ENCODE measurements at regions of chr2 and their contacts with region 1.

Region 1: GRCh38 chr2:20300656-20301055 is 50.0 kb downstream of the PUM2 start:
- DNase-seq: no peak
- ATAC-seq: no peak
- H3K4me3 Mint-ChIP-seq: no peak overlapping the region
- H3K27ac Mint-ChIP-seq: peak overlapping the region; percentile 82
- H3K4me1 Mint-ChIP-seq: peaks cover 7% of the 10 kb centered on the region; the same call in 1 of the 2 replicates
- H3K27me3 Mint-ChIP-seq: no peaks in the 10 kb centered on the region
- CTCF ChIP-seq: no peak

Region 2: GRCh38 chr2:20326163-20326780 is 25.6 kb after region 1 on chr2:
- CTCF ChIA-PET with region 1: interaction called, 10 read pairs
- POLR2A ChIA-PET with region 1: no interaction called
- DNase-seq: peak; percentile 36
- ATAC-seq: peak; percentile 92
- H3K4me3 Mint-ChIP-seq: no peak overlapping the region
- H3K27ac Mint-ChIP-seq: no peak overlapping the region
- H3K4me1 Mint-ChIP-seq: peaks cover 62% of the 10 kb centered on the region
- H3K27me3 Mint-ChIP-seq: no peaks in the 10 kb centered on the region
- CTCF ChIP-seq: peak; percentile 50